ENCODE measurements at regions of chr4 and their contacts with region 1.

Region 1: DNA sequence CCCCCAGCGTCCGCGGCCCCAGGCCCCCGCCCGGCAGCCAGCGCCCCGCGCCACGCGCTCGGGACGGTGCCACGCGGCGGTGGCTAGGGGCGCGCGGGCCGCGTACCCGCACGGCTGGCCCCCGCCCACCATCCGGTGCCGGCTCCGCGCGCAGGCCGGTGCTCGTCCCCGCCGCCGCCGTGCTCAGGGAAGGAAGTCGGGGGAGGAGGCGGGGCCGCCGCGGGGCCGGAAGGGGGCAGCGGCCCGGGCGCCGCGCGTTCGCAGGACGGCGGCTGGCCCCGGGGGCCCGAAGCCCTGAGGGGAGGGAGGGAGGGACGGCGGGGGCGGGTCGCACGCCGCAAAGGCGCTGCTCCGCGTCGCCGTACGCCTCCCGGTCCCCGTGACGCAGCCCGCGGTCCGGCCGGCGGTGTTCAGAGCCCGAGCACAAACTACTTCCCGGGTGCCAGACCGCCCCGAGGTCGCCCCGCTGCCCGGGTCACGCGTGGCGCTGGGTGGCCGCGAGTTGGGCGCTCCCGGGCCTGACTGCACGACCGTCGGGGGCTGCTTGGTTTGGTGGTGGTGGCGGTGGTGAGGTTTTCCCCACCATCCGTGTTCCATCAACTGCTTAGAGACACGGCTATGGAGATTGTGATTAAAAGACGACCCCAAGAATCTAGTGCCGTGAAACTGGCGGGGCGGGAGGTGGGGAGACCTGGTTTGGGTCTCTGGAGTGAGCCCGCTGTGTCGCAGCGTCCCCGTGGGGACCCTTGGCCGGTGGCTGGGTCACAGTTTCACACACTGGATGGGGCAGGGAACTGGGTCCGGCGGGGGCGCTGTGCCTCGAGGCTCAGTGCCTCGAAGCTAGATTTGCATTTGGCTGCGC is at the start of gene DCTD:
- DNase-seq: peak; percentile 81 to 91 (median 86)
- ATAC-seq: peak; percentile 48 to 92 (median 88)
- H3K4me3 ChIP-seq: peak within 1 kb of the TSS; percentile 68 to 98 (median 84)
- H3K27ac ChIP-seq: peak within 1 kb of the TSS; percentile 89 to 98 (median 96)
- H3K4me1 ChIP-seq: peaks cover 0 to 24% (median 12%) of the 10 kb centered on the region in 12 donors
- H3K27me3 ChIP-seq: no peaks in the 10 kb centered on the region
- CTCF ChIP-seq: peak in 9 of 12 donors; percentile 11 to 56 (median 38)
- POLR2A ChIP-seq: peak in 1 of 2 donors; percentile 36
- total RNA-seq, gene DCTD: 28.9 to 55.7 (median 41.2) TPM

Region 2: DNA sequence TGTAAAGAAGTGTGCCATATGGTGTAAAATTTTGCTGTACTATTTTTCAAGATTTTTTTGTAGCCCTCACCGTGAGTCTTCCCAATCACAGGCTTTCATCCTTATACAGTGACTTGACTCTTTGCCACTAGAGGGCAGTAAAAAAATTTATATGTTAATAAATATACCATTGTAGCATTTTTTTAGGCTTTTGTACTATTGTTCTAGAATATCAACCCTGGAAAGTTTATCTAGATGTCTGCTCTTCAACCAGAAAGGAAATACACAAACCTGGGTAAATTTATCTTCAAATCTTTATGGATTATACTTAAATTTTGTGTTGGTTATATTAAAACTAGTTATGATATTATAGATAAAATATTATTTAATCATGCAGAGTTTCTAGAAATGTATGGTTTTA is 438.9 kb before region 1 on chr4:
- intact Hi-C with region 1: loop called in 2 of 10 experiments (anchors 10 kb)
- DNase-seq: no peak
- ATAC-seq: peak in 1 of 4 donors; percentile 39
- H3K4me3 ChIP-seq: no peak overlapping the region
- H3K27ac ChIP-seq: no peak overlapping the region
- H3K4me1 ChIP-seq: no peaks in the 10 kb centered on the region
- H3K27me3 ChIP-seq: no peaks in the 10 kb centered on the region
- CTCF ChIP-seq: peak; percentile 46 to 79 (median 67)
- POLR2A ChIP-seq: no peak

Region 3: GRCh38 chr4:182928061-182928460 is 10.6 kb after region 1 on chr4:
- intact Hi-C with region 1: no loop called
- DNase-seq: no peak
- ATAC-seq: no peak
- H3K4me3 ChIP-seq: no peak overlapping the region
- H3K27ac ChIP-seq: no peak overlapping the region
- H3K4me1 ChIP-seq: no peaks in the 10 kb centered on the region
- H3K27me3 ChIP-seq: no peaks in the 10 kb centered on the region
- CTCF ChIP-seq: peak in 5 of 12 donors; percentile 10 to 21 (median 13)
- POLR2A ChIP-seq: no peak